ENCODE measurements at regions of chr9 and their contacts with region 1.

Region 1: DNA sequence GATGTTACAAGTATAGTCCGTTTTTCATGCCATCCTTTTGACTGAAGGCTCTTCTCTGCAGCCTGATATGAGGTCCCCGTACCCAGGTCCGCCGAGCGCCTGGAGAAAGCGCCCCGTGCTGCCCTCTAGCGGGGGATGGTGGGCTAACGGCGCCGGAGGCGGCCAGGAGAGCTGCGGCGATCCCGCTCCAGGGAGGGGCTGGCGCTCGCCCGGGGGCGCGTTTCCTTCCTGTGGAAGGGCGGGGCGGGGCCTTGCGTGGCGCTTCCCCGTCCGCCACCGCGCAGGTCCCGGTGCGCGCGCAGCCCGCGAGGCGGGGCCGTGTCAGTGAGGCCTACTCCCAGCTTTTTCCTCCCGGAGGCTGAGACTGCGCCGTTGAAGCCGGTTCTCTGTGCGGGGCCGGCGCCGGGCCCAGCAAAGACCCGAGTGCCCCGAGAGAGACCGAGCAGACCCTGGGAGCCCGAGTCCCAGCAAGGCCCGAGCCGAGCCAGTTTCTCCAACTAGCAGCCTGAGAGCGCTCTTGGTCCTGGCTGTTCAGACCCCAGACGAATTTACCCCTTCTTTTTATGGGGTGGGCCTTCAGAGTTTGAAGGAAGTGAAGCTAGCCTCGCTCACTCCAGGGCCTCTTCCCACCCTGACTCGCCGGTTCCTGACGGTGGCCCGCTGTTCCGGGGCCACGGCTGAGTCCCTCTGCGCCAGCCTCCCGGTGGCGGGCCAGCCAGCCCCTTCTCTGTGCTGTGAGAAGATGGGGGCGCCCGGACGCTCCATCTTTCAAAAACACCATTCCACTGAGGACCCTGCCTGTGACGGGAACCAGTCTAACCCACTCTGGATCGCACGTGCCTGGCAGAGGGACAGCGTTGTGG is 9.7 kb upstream of the PHF2 start:
- DNase-seq: peak; percentile 99
- CTCF ChIP-seq: peak; percentile 98

Region 2: GRCh38 chr9:92931606-92932005 is 635.0 kb before region 1 on chr9:
- CTCF ChIA-PET with region 1: no interaction called
- POLR2A ChIA-PET with region 1: no interaction called
- DNase-seq: no peak
- CTCF ChIP-seq: no peak

Region 3: DNA sequence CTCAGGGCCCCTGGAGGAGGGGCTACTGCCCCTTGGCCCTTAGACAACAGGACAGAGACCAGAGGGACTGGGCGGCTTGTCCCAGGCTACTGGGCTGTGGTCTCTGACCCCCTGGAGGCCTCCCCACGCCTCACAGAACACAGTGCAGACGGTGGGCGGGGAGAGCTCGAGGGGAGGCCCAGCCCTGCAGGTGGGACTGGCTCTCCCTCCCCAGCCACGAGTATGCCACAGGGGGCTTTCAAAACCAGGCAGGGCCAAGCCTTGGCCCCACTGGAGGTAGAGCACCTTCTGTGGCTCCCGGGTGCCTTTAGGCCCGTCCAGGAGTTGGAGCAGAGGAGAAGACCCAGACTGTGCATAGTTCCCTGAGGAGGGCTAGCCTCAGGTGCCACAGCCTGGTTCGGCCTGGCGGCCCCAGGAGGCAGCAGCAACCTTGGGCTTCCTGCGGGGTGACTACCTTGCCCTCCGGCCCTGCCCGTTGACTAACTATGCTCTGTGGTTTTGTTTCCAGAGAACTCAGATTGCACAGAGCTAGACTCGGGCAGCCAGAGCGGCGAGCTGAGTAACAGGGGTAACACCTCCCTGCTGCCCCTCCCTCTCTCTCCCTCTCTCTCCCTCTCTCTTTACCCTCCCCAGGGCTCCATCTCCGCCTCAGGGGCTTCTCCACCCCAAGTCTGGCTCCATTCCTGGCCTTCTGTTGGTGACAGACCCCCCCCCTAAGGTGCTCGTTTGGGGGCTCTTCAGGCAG is 455.1 kb before region 1 on chr9:
- CTCF ChIA-PET with region 1: interaction called, 11 read pairs
- POLR2A ChIA-PET with region 1: no interaction called
- DNase-seq: no peak
- CTCF ChIP-seq: no peak

Region 4: GRCh38 chr9:93446073-93446472 is 120.6 kb before region 1 on chr9:
- CTCF ChIA-PET with region 1: interaction called, 10 read pairs
- POLR2A ChIA-PET with region 1: no interaction called
- DNase-seq: no peak
- CTCF ChIP-seq: no peak

Region 5: DNA sequence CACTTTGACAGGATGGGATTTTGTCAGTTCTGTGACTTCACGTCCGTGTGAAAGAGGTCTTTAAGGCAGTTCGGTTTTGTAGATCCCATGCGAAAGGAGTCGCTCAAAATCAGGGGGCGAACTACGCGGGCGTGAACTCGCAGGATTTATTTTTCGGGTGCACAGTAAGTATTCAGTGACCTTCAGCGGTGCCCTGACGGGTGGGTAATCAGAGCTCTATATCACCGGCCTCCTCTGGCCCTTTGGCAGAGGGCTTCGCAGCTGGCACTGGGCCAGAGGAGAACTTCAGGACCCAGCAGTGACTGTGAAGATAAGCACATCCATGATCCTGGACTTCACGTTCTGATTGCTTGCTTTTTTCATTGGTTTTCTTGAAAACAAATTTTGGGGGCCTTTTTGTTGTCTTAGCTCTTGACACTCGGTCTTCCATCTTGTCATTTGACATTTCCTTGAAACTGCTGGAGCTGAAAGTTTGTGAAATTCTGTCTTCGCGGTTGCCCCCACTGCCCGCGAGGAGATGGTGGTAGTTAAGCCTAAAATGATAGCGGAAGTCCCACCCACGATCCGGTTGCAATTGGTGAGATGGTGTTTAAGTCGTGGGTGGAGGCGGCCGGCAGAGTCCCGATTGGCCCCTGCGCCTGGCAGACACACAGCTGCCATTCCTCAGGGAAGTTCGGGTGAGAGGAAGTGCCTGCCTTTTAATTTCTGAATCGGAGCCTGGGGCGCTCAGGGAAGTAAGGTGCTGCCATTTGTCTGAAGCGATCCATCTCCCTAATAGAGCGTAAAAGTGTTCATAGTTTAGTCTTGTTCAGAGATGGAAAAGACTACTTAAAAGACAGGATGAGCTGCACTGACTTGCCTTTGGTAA is 113.4 kb before region 1 on chr9 and contains the start of gene FAM120AOS:
- CTCF ChIA-PET with region 1: interaction called, 12 read pairs
- POLR2A ChIA-PET with region 1: no interaction called
- DNase-seq: peak; percentile 88
- CTCF ChIP-seq: no peak

Region 6: GRCh38 chr9:93536874-93537273 is 29.8 kb before region 1 on chr9:
- CTCF ChIA-PET with region 1: interaction called, 10 read pairs
- POLR2A ChIA-PET with region 1: no interaction called
- DNase-seq: no peak
- CTCF ChIP-seq: peak; percentile 12

Region 7: DNA sequence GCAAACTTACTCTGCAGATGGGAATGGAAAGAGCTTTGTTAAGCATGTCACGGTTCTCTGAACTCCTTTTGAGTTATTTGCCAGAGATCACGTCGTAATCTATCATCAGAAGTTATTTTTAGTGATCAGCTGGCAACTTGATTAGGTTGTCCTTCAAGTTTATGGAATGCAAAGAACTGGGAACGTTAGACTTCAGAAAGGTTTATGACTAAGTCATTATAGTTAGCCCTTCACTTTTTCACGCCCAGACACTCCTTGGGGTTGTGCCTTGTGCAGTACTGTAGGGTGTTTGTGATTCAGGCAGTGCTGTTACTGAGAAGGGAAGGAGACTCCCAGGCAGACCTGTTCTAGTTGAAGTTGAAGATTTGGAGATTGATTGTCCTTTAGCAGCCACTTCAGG is 17.0 kb before region 1 on chr9:
- CTCF ChIA-PET with region 1: interaction called, 68 read pairs
- POLR2A ChIA-PET with region 1: no interaction called
- DNase-seq: no peak
- CTCF ChIP-seq: no peak

Region 8: GRCh38 chr9:93582115-93582514 is 15.5 kb after region 1 on chr9:
- CTCF ChIA-PET with region 1: interaction called, 20 read pairs
- POLR2A ChIA-PET with region 1: no interaction called
- DNase-seq: no peak
- CTCF ChIP-seq: no peak

Region 9: GRCh38 chr9:93603906-93604326 is 37.3 kb after region 1 on chr9:
- CTCF ChIA-PET with region 1: no interaction called
- POLR2A ChIA-PET with region 1: no interaction called
- DNase-seq: no peak
- CTCF ChIP-seq: no peak